ENCODE measurements at regions of chr1 and their contacts with region 1.

Region 1: GRCh38 chr1:50959913-50960844 is at the start of gene FAF1:
- DNase-seq: peak; percentile 98
- H3K4me3 Mint-ChIP-seq: peak within 1 kb of the TSS; percentile 85
- H3K27ac Mint-ChIP-seq: peak within 1 kb of the TSS; percentile 84
- H3K4me1 Mint-ChIP-seq: peaks cover 21% of the 10 kb centered on the region
- H3K27me3 Mint-ChIP-seq: no peaks in the 10 kb centered on the region
- total RNA-seq, gene FAF1: 77.0 to 84.6 TPM

Region 2: GRCh38 chr1:50422946-50423669 is 537.1 kb before region 1 on chr1 and contains the start of gene DMRTA2:
- CTCF ChIA-PET with region 1: no interaction called
- POLR2A ChIA-PET with region 1: no interaction called
- intact Hi-C with region 1: loop called (anchors 10 kb)
- DNase-seq: no peak
- H3K4me3 Mint-ChIP-seq: peak within 1 kb of the TSS; percentile 73
- H3K27ac Mint-ChIP-seq: no peak within 1 kb of the TSS
- H3K4me1 Mint-ChIP-seq: peaks cover 57% of the 10 kb centered on the region
- H3K27me3 Mint-ChIP-seq: peaks cover 82% of the 10 kb centered on the region
- total RNA-seq, gene DMRTA2: not detected

Region 3: DNA sequence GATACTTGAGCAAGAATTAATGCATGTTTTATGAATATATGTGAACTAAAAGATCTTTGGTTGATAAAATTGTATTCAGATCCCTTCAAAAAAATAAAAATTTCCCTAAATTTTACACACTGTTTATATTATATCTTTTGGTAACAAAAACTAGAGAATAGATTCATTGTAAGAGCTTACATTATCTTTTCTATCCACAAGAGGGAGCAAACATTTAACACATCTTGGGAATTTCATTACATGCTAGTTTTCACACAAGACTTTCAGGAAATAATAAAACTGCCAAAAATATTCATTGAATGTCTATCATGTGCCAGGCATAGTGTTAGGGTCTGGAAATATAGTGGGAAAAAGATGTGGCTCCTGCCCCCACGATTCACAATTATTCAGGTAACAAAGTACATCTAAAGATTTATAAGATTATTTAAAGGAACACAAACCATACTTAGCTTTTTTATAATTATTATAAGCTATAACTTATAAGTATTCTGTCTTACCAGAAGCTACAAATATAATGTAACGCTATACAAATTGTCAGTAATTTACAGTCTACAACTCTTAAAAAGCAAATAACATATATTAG is 30.7 kb before region 1 on chr1:
- CTCF ChIA-PET with region 1: interaction called, 15 read pairs
- POLR2A ChIA-PET with region 1: no interaction called
- intact Hi-C with region 1: no loop called
- DNase-seq: no peak
- H3K4me3 Mint-ChIP-seq: no peak overlapping the region
- H3K27ac Mint-ChIP-seq: no peak overlapping the region
- H3K4me1 Mint-ChIP-seq: peaks cover 26% of the 10 kb centered on the region
- H3K27me3 Mint-ChIP-seq: no peaks in the 10 kb centered on the region

Region 4: DNA sequence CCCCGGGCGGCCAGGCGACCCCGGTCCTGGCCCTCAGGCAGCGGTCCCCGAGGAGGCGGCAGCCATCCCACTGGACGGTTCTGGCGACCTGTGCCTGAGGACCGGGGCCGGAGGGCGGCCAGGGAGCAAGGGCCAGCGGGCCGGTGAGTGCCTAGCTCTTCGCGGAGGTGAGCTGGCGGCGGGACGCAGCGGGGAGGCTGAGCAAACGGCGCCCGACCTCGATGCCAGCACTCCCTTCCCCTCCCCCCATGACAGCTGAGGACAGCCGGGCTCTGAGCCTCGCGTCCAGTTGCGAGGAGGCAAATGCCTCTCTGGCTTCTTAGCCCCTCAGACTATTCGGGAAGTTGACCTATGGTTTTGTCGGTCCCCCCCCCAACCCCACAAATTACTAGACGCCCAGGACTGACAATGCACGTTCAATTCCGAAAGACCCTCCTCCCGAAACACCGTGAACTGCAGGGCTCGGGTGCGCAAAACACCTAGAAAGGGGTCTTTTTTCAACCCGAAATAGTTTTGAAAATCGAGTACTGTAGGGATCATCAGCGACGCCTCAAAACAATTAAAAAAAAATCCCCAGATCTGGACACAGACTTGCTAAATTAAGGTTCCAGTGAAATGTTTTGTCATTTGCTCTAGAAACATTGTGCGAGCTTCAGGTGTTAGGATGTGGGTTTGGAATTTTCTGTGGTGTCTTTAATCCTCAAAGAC is 18.1 kb after region 1 on chr1:
- CTCF ChIA-PET with region 1: interaction called, 7 read pairs
- POLR2A ChIA-PET with region 1: interaction called, 3 read pairs
- intact Hi-C with region 1: loop called (anchors 2 kb)
- DNase-seq: peak; percentile 34
- H3K4me3 Mint-ChIP-seq: peak overlapping the region; percentile 75
- H3K27ac Mint-ChIP-seq: no peak overlapping the region
- H3K4me1 Mint-ChIP-seq: peaks cover 22% of the 10 kb centered on the region
- H3K27me3 Mint-ChIP-seq: peaks cover 41% of the 10 kb centered on the region

Region 5: GRCh38 chr1:51235673-51236530 is 275.7 kb after region 1 on chr1 and contains the start of gene RNF11:
- CTCF ChIA-PET with region 1: no interaction called
- POLR2A ChIA-PET with region 1: no interaction called
- intact Hi-C with region 1: loop called (anchors 1 kb)
- DNase-seq: peak; percentile 94
- H3K4me3 Mint-ChIP-seq: peak within 1 kb of the TSS; percentile 89
- H3K27ac Mint-ChIP-seq: peak within 1 kb of the TSS; percentile 81
- H3K4me1 Mint-ChIP-seq: peaks cover 38% of the 10 kb centered on the region
- H3K27me3 Mint-ChIP-seq: no peaks in the 10 kb centered on the region
- total RNA-seq, gene RNF11: 26.3 to 31.9 TPM

Region 6: GRCh38 chr1:51878616-51879336 is 918.6 kb after region 1 on chr1 and contains the start of gene NRDC:
- CTCF ChIA-PET with region 1: no interaction called
- POLR2A ChIA-PET with region 1: no interaction called
- intact Hi-C with region 1: loop called (anchors 10 kb)
- DNase-seq: peak; percentile 100
- H3K4me3 Mint-ChIP-seq: no peak within 1 kb of the TSS
- H3K27ac Mint-ChIP-seq: no peak within 1 kb of the TSS
- H3K4me1 Mint-ChIP-seq: peaks cover 33% of the 10 kb centered on the region
- H3K27me3 Mint-ChIP-seq: peaks cover 6% of the 10 kb centered on the region
- total RNA-seq, gene NRDC: 153 to 155 TPM